PC-9 (cell line): ENCODE measurements at regions of chr5 and their contacts with region 1.

Region 1: GRCh38 chr5:173498286-173498685 is 118.2 kb downstream of the BOD1 start:
- DNase-seq: peak; percentile 38 to 88
- H3K4me3 ChIP-seq: no peak overlapping the region
- H3K27ac ChIP-seq: peak overlapping the region; percentile 81
- H3K4me1 ChIP-seq: peaks cover 33% of the 10 kb centered on the region
- H3K27me3 ChIP-seq: no peaks in the 10 kb centered on the region
- CTCF ChIP-seq: no peak

Region 2: DNA sequence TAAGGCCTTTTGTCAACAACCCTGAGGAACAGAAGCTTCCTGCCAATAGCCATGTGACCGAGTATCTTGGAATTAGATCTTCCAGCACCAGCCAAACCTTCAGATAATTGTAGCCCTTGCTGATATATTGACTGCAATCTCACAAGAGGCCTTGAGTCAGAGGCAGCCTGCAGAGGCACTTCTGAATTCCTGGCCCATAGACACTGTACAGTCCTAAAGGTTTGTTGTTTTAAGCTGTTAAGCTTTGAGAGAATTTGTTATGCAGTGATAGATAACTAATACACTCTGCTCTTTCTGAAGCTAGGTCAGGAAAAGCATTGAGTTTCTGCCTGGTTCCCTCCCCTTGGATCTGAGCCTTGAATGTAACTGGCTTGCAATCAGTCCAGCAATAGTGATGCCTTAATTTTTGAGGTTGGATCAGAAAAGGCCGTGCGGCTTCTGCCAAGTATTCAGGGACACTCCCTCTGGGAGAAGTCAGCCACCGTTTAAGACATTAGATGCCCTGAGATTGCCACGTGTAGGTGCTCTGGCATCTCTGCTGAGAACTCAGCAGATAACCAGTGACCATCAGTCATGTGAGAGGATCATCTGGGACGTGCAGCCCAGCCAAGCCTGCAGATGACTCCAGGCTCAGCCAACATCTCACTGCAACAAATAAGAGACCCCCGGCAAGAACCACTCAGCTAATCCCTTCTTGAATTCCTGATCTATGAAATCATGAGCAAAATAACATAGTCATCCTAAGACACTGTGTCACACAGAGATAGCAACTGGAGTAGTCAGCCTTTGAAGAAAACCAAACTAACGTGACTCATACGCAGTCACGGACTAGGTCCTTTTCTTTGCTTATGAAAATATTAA is 43.3 kb before region 1 on chr5:
- CTCF ChIA-PET with region 1: no interaction called
- POLR2A ChIA-PET with region 1: no interaction called
- intact Hi-C with region 1: loop called (anchors 2 kb)
- DNase-seq: peak; percentile 80 to 98
- H3K4me3 ChIP-seq: peak overlapping the region; percentile 11; the same call in 1 of the 2 replicates
- H3K27ac ChIP-seq: peak overlapping the region; percentile 100
- H3K4me1 ChIP-seq: peaks cover 89% of the 10 kb centered on the region
- H3K27me3 ChIP-seq: no peaks in the 10 kb centered on the region
- CTCF ChIP-seq: peak; percentile 7; the same call in 1 of the 2 replicates

Region 3: GRCh38 chr5:173481821-173482220 is 16.5 kb before region 1 on chr5:
- CTCF ChIA-PET with region 1: no interaction called
- POLR2A ChIA-PET with region 1: no interaction called
- intact Hi-C with region 1: loop called (anchors 1 kb)
- DNase-seq: no peak
- H3K4me3 ChIP-seq: no peak overlapping the region
- H3K27ac ChIP-seq: peak overlapping the region; percentile 99; the same call in 1 of the 2 replicates
- H3K4me1 ChIP-seq: peaks cover 26% of the 10 kb centered on the region
- H3K27me3 ChIP-seq: no peaks in the 10 kb centered on the region
- CTCF ChIP-seq: no peak